Activated CD4-positive, alpha-beta memory T cell treated with anti-CD3 and anti-CD28 coated beads for 36 hours (primary cell): ENCODE measurements at regions of chr16 and their contacts with region 1.

Region 1: GRCh38 chr16:30534368-30535105 is at the start of gene ZNF747:
- DNase-seq: peak; percentile 94
- H3K4me3 Mint-ChIP-seq: peak within 1 kb of the TSS; percentile 89
- H3K27ac Mint-ChIP-seq: peak within 1 kb of the TSS; percentile 95
- H3K4me1 Mint-ChIP-seq: peaks cover 38% of the 10 kb centered on the region
- H3K27me3 Mint-ChIP-seq: no peaks in the 10 kb centered on the region
- total RNA-seq, gene ZNF747: 7.2 to 7.6 TPM

Region 2: GRCh38 chr16:30378236-30379204 is 156.0 kb before region 1 on chr16:
- CTCF ChIA-PET with region 1: no interaction called
- POLR2A ChIA-PET with region 1: no interaction called
- intact Hi-C with region 1: no loop called
- DNase-seq: peak; percentile 100
- H3K4me3 Mint-ChIP-seq: peak overlapping the region; percentile 99
- H3K27ac Mint-ChIP-seq: peak overlapping the region; percentile 96
- H3K4me1 Mint-ChIP-seq: peaks cover 44% of the 10 kb centered on the region
- H3K27me3 Mint-ChIP-seq: no peaks in the 10 kb centered on the region

Region 3: DNA sequence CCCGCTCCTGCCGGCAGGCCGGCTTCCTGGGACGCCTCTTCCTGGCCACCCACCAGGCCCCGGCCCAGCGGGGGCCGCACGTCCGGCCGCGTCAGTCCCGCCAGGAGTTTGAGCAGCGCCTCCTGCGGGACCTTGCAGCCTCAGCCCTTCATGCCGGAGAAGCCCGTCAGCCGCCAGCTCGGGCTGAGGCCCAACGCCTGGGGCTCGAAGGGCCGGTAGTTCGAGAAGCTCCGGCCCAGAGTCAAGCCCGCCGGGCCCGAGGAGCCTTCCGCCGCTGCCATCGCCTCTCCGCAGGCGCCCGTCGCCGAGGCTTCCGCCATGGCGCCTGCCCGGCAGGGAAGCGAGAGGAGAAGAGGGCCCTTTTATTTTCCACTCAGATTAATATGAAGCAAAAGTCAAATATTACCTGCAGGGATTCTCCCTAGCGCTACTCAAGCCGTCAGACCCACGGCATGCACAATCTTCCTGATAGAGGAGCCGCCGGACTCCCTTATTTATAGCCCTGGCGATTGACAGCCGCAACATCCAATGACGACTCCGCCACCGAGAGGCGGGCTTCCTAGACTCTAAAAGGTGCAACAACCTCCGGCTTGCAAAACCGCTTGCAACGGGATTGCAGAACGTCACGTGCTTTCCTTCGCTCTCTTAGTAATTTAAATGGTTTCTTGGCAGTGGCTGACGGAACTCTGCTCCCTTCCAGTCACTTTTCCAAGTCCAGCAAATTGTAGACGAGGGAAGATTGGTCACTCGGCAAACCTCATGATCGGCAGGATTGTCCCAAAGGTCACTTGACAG is 88.9 kb before region 1 on chr16 and contains the start of gene SEPHS2:
- CTCF ChIA-PET with region 1: interaction called, 8 read pairs
- POLR2A ChIA-PET with region 1: interaction called, 5 read pairs
- intact Hi-C with region 1: loop called (anchors 2 kb)
- DNase-seq: peak; percentile 98
- H3K4me3 Mint-ChIP-seq: peak within 1 kb of the TSS; percentile 90
- H3K27ac Mint-ChIP-seq: peak within 1 kb of the TSS; percentile 91
- H3K4me1 Mint-ChIP-seq: peaks cover 37% of the 10 kb centered on the region
- H3K27me3 Mint-ChIP-seq: no peaks in the 10 kb centered on the region
- total RNA-seq, gene SEPHS2: 61.4 to 61.7 TPM

Region 4: DNA sequence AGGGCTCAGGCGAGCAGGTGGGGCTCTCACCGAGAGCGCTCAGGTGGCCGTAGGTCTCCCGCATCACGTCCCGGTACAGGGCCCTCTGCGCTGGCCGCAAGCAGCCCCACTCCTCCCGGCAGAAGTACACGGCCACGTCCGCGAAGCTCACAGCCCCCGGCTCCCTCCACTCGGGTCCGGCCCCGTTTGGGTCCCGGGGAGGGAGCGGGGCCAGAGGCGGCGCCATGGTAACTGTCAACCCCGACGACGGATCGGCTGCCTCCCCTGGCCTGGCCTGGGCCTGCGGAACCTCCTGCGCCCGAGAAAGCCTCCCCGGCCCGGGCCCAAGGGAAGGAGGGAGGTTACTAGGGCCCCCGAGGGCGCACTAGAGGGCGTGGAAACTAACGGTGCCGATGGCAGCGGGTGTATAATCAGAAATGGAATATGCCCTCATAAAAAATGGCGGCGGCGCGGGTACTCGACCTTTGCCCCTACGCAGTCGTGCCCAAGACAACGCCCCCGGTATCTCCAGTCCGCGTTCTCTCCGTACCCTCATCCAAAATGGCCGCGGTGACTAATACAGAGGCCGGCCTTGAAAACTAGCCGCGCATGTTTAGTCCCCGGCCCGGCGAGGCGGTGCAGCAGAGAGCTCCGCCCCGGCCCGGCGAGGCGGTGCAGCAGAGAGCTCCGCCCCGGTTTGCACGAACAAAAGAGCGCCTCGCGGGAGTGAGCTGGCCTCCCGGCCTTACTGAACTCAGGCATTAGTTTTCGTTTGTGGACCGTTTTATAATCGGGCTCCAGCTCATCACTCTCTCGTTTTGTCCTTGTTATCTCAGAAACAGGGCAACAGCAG is 23.6 kb after region 1 on chr16 and contains the start of gene ZNF764:
- CTCF ChIA-PET with region 1: interaction called, 53 read pairs
- POLR2A ChIA-PET with region 1: interaction called, 59 read pairs
- intact Hi-C with region 1: loop called (anchors 1 kb)
- DNase-seq: peak; percentile 99
- H3K4me3 Mint-ChIP-seq: peak within 1 kb of the TSS; percentile 89
- H3K27ac Mint-ChIP-seq: peak within 1 kb of the TSS; percentile 96
- H3K4me1 Mint-ChIP-seq: peaks cover 38% of the 10 kb centered on the region
- H3K27me3 Mint-ChIP-seq: no peaks in the 10 kb centered on the region
- total RNA-seq, gene ZNF764: 13.7 to 14.2 TPM

Region 5: GRCh38 chr16:30585400-30586189 is 51.1 kb after region 1 on chr16 and contains the start of gene ZNF785:
- CTCF ChIA-PET with region 1: interaction called, 22 read pairs
- POLR2A ChIA-PET with region 1: interaction called, 18 read pairs
- intact Hi-C with region 1: loop called (anchors 1 kb)
- DNase-seq: peak; percentile 97
- H3K4me3 Mint-ChIP-seq: peak within 1 kb of the TSS; percentile 83
- H3K27ac Mint-ChIP-seq: peak within 1 kb of the TSS; percentile 83
- H3K4me1 Mint-ChIP-seq: peaks cover 32% of the 10 kb centered on the region
- H3K27me3 Mint-ChIP-seq: no peaks in the 10 kb centered on the region
- total RNA-seq, gene ZNF785: 14.0 to 15.0 TPM

Region 6: DNA sequence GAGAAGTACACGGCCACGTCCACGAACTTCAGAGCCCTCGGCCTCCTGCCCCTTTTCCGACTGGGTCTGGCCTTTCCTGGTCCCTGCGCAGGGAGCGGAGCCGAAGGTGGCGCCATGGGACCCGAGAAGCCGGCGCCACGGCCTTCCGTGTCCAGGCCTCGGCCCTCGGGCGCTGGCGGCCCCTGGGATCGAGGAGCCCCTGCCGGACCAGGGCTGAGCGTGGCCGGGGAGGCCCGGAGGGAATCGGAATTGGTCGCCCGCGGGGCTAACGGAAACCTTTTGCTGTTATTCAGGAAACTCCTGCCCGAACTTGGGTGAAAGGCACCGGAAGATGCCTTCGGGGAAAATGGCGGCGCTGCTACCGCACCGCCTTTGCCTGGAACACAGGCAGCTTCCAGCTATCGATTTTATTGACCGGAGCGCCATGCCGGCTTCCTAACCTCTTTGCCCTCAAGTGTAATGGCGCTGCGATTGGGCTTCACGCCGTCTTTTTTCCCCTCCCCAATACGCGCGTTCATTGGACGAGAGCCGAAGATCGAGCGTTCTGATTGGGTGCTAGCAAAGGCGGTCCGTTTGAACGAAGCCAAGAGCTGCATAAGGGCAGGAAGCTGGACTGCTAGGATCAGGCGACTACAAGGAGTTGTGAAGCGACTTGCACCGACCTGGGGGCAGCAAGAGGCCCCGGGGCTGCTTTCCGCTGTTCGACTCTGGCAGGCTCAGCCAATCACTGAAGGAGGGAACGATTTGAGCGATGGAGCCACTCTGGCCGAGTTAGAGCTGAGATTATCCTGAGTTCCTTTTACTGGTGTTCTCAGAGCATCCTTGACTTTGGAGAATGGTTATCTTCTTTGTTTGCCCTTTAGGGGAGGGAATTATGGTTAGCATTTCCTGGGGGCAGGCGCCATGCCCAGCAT is 75.6 kb after region 1 on chr16 and contains the start of gene ZNF689:
- CTCF ChIA-PET with region 1: interaction called, 16 read pairs
- POLR2A ChIA-PET with region 1: interaction called, 15 read pairs
- intact Hi-C with region 1: loop called (anchors 5 kb)
- DNase-seq: peak; percentile 98
- H3K4me3 Mint-ChIP-seq: peak within 1 kb of the TSS; percentile 89
- H3K27ac Mint-ChIP-seq: peak within 1 kb of the TSS; percentile 94
- H3K4me1 Mint-ChIP-seq: peaks cover 15% of the 10 kb centered on the region
- H3K27me3 Mint-ChIP-seq: no peaks in the 10 kb centered on the region
- total RNA-seq, gene ZNF689: 8.7 to 9.9 TPM

Region 7: GRCh38 chr16:30628627-30629540 is 94.3 kb after region 1 on chr16:
- CTCF ChIA-PET with region 1: interaction called, 12 read pairs
- POLR2A ChIA-PET with region 1: interaction called, 14 read pairs
- intact Hi-C with region 1: no loop called
- DNase-seq: peak; percentile 94
- H3K4me3 Mint-ChIP-seq: peak overlapping the region; percentile 60
- H3K27ac Mint-ChIP-seq: peak overlapping the region; percentile 57
- H3K4me1 Mint-ChIP-seq: peaks cover 4% of the 10 kb centered on the region
- H3K27me3 Mint-ChIP-seq: no peaks in the 10 kb centered on the region